Adrenal gland (tissue), 19 donors: ENCODE measurements at regions of chr4 and their contacts with region 1.

Region 1: GRCh38 chr4:20422398-20422797 is 170.7 kb downstream of the SLIT2 start:
- DNase-seq: peak; percentile 38 to 78 (median 58)
- H3K4me3 ChIP-seq: no peak overlapping the region
- H3K27ac ChIP-seq: no peak overlapping the region
- H3K4me1 ChIP-seq: peaks cover 0 to 5% of the 10 kb centered on the region in 2 donors
- H3K27me3 ChIP-seq: no peaks in the 10 kb centered on the region
- CTCF ChIP-seq: peak; percentile 50 to 79 (median 73)
- POLR2A ChIP-seq: no peak

Region 2: GRCh38 chr4:20326977-20327376 is 95.4 kb before region 1 on chr4:
- intact Hi-C with region 1: no loop called
- DNase-seq: no peak
- H3K4me3 ChIP-seq: no peak overlapping the region
- H3K27ac ChIP-seq: no peak overlapping the region
- H3K4me1 ChIP-seq: no peaks in the 10 kb centered on the region
- H3K27me3 ChIP-seq: no peaks in the 10 kb centered on the region
- CTCF ChIP-seq: no peak
- POLR2A ChIP-seq: no peak

Region 3: GRCh38 chr4:20544645-20545044 is 122.2 kb after region 1 on chr4:
- intact Hi-C with region 1: loop called in 1 of 2 experiments (anchors 5 kb)
- DNase-seq: no peak
- H3K4me3 ChIP-seq: no peak overlapping the region
- H3K27ac ChIP-seq: no peak overlapping the region
- H3K4me1 ChIP-seq: peaks cover 0 to 8% of the 10 kb centered on the region in 2 donors
- H3K27me3 ChIP-seq: no peaks in the 10 kb centered on the region
- CTCF ChIP-seq: peak; percentile 26 to 75 (median 64)
- POLR2A ChIP-seq: no peak

Region 4: DNA sequence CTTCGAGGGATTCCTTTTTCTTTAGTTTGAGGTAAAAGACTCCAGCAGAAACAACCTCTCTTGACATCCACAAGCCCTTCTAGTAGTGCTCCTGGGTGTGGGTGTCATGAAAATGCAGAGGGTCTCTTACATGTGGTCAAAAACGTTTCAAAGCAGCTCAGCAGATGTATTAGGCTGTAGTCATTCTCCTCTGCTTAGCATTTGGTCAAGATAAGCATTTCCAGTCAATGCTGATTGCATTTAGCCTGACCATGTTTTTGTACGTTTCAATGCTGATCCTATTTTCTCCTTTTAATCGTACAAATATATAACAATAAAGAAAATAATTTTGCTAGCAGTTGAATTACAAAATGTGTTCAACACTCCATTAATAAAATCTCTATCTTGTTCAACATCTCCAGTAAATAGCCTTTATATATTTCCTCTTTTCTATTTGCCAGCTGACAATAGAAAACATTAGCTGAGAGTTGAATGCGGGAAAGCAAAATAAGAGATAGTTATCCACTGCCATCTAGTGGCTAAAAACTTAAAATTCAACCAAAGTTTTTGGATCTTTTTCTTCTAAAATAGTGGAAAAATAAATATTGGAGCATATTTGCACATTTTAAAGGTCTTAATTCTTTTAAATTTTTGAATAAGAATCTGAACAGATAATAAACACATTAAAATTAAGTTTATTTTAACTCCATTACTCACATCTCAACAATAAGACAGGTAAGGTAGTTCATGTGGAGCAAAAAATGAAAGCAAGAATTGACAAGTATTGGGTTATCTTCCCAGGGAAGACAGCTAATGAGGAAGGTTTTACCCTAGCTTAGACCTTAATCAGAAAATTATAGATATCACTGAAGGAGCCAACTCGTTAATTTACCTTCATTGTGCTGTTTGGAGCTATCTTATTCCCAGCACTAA is 262.7 kb after region 1 on chr4:
- intact Hi-C with region 1: loop called (anchors 10 kb)
- DNase-seq: no peak
- H3K4me3 ChIP-seq: no peak overlapping the region
- H3K27ac ChIP-seq: no peak overlapping the region
- H3K4me1 ChIP-seq: no peaks in the 10 kb centered on the region
- H3K27me3 ChIP-seq: no peaks in the 10 kb centered on the region
- CTCF ChIP-seq: peak; percentile 53 to 76 (median 68)
- POLR2A ChIP-seq: no peak

Region 5: GRCh38 chr4:21155367-21155766 is 733.0 kb after region 1 on chr4:
- intact Hi-C with region 1: no loop called
- DNase-seq: no peak
- H3K4me3 ChIP-seq: no peak overlapping the region
- H3K27ac ChIP-seq: no peak overlapping the region
- H3K4me1 ChIP-seq: no peaks in the 10 kb centered on the region
- H3K27me3 ChIP-seq: no peaks in the 10 kb centered on the region
- CTCF ChIP-seq: no peak
- POLR2A ChIP-seq: no peak